Left ventricle myocardium superior (tissue), 1 donor: ENCODE measurements at regions of chr15 and their contacts with region 1.

Region 1: DNA sequence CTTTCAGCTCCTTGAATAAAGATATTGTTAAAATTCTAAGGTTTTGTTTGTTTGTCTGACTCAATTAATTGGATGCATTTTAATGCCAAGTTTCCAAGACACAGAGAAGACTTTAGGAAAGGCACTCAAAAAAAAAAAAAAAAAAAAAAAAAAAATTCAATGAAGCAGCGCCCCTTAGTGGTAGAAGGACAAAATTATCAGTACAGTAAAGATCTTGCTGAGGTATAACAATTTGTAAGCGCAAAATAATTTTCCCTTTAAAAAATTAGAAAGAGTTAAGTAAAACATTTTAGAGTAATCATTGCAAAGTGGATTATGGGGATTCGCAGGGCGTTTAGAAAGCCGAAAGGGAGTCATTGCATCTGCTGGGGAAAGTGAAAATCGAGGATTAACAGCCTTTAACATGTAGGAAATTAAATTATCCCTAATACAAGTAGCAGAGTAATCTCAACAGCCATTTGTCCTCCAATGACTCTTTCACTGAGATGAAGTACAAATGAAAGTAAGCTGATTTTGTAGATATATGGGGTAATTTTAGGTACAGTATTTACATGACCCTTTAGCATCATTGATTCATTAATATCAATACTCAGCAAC is 5.8 kb upstream of the DIS3L start:
- DNase-seq: no peak
- ATAC-seq: no peak

Region 2: DNA sequence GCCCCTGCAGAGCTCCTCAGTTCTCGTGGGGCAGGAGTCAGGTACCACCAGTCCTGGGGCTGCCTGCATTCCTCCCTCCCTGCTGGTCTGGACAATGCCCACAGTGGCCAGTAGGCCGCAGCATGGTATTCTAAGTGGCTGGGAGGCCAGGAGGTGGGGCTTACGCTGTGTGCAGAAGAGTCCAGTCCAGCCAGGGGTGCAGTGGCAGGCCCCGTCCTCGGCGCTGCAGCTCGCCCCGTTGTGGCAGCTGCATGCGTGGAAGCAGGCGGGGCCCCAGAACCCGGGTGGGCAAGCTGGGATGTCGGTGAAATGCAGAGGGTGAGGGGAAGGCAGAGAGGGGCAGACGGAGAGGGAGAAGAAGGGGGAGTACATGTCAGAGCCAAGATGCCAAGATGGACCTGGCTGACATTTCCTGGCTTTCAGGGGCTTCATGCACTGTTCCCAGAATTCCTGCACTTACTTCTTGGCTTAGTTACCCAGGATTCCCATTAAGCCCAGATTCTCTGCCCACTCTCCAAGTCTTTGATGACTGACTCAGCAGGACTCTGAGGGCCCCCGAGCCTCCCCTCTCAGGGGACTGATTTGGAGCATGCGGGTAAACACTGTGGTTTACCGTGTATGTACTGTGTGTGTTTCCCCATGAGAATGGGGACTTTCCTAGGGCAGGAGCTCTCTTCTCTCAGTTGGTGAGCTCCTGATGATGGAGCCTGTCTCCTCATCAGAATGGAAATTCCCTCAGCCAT is 370.7 kb before region 1 on chr15:
- intact Hi-C with region 1: loop called (anchors 10 kb)
- DNase-seq: peak; percentile 72
- ATAC-seq: peak; percentile 92

Region 3: DNA sequence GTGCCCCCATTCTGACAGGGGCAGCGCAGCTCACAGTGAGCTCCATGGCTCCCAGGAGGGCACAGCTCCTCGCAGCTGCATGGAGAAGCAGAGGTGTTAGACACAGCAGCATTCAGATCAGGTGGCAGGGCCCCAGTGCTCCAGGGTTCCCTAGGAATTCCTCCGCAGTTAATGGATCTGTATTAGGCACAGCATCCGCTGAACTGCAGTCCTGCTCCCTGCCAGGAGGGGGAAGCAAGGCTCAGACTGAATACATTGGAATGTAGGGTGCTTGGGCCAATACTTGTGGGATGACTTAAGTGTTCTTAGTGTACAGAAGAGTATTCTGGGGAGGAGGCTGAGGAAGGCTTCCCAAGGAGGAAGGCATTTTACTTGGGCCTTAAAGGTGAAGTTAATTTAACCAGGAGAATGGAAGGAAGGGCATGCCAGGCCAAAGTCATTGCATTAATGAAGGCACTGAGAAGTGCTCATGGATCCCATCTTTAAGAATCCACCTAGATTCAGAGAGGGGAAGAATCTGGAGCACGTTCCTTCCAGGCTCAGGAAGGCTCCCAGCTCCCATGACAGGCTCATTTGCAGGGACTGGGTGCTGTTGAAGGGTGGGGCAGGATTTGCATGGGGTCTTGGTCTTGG is 306.6 kb before region 1 on chr15:
- intact Hi-C with region 1: loop called (anchors 5 kb)
- DNase-seq: peak; percentile 68
- ATAC-seq: peak; percentile 81